ENCODE measurements at regions of chr11 and their contacts with region 1.

Region 1: DNA sequence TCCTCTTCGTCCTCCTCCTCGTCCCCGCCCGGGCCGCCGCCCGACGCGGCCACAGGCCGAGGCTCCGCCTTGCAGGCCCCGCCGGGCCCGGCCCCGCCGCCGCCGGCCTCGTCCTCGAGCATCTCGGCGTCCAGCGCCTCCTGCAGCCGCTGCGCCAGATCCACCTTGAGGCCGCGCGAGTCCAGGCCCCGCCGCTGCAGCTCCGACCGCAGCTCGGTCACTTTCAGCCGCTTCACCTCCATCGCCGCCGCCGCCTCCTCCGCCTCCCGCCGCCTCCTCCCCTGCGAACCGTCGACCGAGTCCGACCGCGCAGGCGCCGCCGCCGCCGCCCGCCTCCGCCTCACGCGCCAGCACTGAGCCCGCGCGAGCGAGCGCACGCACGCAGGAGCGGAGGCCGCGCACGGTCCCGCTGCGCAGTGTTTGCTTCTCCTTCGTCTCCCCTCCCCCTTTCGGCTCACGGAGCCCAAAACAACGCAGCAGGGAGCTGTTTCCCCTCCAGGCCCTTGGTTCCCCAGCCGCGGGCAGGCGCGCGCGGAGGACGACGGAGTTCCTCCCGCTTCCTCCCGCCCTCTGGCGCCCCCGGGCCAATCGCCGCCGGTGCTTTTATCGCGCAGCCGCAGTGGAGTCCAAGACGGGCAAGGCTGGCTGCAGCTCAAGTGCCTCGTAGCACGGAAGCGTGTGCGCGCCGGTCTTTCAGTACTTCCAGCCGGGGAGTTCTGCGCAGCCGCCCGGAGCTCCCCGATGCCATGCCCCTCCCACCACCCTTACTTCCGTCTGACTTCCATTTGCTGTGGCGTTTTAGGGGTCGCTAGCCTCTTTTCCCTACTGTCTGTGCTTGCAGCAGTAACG is at the start of gene HNRNPUL2:
- DNase-seq: peak; percentile 92
- H3K4me3 ChIP-seq: peak within 1 kb of the TSS; percentile 96
- CTCF ChIP-seq: peak; percentile 4

Region 2: DNA sequence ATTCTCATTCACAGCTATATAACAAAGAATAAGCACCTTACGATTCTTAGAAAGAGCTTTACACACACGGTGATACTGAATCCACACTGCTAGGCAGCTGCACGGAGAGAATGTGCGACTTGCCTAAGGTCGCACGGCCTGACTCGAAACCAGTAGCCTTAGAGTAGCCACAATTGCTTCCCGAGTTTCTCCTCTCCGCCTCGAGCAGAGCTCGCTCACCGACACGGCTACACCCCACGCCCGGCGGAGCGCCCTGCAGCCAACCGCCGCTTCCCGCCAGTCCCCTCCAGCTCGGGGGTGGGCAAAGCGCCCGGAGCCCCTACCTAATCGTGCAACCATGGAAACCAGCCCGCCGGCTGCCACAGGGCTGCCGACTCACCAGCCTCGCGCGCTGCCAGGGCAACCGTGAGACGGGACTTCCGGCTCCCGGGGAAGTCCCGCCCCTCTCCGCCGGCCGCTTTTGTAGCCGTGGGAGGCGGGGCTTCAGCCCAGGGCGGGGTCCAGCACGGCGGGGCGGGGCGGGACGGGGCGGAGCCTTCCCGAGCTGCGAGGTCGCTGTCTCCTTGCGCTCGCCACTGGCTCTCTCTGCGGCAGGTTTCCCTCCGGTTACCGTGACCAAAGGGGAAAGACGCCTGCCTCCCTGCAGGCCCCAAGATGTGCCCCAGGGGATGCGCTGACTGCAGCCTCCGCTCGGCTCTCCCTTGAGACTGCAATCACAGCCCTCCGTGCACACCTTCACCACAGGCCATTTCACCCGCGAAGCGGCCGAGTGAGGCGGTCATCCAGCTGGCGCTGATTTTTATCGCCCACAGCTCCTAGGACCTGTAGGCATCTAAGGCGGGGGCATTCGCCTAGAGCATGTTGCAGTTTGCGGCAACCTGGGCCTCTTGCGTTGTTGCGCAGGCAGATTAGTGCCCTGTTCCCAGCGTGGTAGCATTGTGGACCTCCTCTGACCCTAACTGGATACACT is 21.0 kb before region 1 on chr11:
- CTCF ChIA-PET with region 1: interaction called, 3 read pairs
- POLR2A ChIA-PET with region 1: interaction called, 24 read pairs
- DNase-seq: no peak
- H3K4me3 ChIP-seq: peak overlapping the region; percentile 77
- CTCF ChIP-seq: no peak

Measured in AG04449 (cell line).